A673 (cell line): ENCODE measurements at regions of chr18 and their contacts with region 1.

Region 1: DNA sequence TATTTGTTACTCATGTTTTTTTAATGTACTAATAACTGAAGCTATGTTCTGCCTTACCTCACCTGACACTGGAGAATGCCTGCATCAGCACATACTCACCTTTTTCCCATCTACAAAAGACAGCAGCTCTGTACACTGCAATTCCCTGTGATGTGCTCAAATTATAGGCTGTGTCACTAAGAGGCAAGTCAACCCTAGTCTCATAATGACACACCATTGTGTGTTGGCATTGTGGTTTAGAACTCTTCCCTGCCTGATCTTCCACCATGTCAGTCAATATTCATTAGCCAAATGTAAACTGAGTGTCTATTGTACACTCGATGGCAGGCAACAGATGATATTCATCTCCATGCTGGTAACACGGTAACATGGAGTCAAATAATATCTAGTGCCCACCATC is 332.1 kb upstream of the TCF4 start:
- DNase-seq: no peak
- H3K4me3 ChIP-seq: no peak overlapping the region
- H3K27ac ChIP-seq: no peak overlapping the region
- H3K4me1 ChIP-seq: no peaks in the 10 kb centered on the region
- H3K27me3 ChIP-seq: no peaks in the 10 kb centered on the region
- CTCF ChIP-seq: no peak

Region 2: GRCh38 chr18:55869556-55870501 is 50.2 kb before region 1 on chr18:
- CTCF ChIA-PET with region 1: no interaction called
- POLR2A ChIA-PET with region 1: no interaction called
- intact Hi-C with region 1: loop called (anchors 5 kb)
- DNase-seq: no peak
- H3K4me3 ChIP-seq: no peak overlapping the region
- H3K27ac ChIP-seq: no peak overlapping the region
- H3K4me1 ChIP-seq: peaks cover under 1% of the 10 kb centered on the region
- H3K27me3 ChIP-seq: no peaks in the 10 kb centered on the region
- CTCF ChIP-seq: no peak

Region 3: GRCh38 chr18:55907453-55908175 is 12.4 kb before region 1 on chr18:
- CTCF ChIA-PET with region 1: no interaction called
- POLR2A ChIA-PET with region 1: no interaction called
- intact Hi-C with region 1: no loop called
- DNase-seq: no peak
- H3K4me3 ChIP-seq: no peak overlapping the region
- H3K27ac ChIP-seq: no peak overlapping the region
- H3K4me1 ChIP-seq: no peaks in the 10 kb centered on the region
- H3K27me3 ChIP-seq: no peaks in the 10 kb centered on the region
- CTCF ChIP-seq: no peak